ENCODE measurements at regions of chr3 and their contacts with region 1.

Region 1: GRCh38 chr3:102745882-102746281 is 311.1 kb downstream of the ZPLD1 start:
- DNase-seq: peak; percentile 68
- H3K4me3 ChIP-seq: no peak overlapping the region
- H3K27ac ChIP-seq: no peak overlapping the region
- H3K4me1 ChIP-seq: peaks cover 8% of the 10 kb centered on the region
- H3K27me3 ChIP-seq: no peaks in the 10 kb centered on the region
- CTCF ChIP-seq: peak; percentile 63

Region 2: DNA sequence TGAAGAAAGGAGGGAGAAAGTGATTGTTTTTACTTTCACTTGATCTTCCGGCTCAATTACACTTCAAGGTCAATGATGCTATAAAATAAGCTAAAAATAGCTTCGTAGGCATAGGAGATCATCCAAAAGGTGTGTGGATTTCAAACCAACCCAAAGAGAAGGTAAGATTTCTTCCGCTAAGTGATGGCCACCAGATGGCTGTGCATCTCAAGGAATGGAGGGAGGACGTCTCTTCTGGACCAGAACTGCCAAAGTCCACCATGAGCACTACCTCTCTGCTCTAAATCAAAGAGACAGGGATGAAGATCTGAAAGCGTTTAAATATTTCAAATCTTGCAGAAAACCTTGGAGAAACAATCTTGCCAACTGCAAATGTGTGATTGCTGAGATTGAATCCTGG is 510.2 kb before region 1 on chr3:
- CTCF ChIA-PET with region 1: no interaction called
- POLR2A ChIA-PET with region 1: no interaction called
- intact Hi-C with region 1: loop called (anchors 10 kb)
- DNase-seq: peak; percentile 33
- H3K4me3 ChIP-seq: no peak overlapping the region
- H3K27ac ChIP-seq: no peak overlapping the region
- H3K4me1 ChIP-seq: peaks cover 13% of the 10 kb centered on the region
- H3K27me3 ChIP-seq: no peaks in the 10 kb centered on the region
- CTCF ChIP-seq: peak; percentile 62

Region 3: DNA sequence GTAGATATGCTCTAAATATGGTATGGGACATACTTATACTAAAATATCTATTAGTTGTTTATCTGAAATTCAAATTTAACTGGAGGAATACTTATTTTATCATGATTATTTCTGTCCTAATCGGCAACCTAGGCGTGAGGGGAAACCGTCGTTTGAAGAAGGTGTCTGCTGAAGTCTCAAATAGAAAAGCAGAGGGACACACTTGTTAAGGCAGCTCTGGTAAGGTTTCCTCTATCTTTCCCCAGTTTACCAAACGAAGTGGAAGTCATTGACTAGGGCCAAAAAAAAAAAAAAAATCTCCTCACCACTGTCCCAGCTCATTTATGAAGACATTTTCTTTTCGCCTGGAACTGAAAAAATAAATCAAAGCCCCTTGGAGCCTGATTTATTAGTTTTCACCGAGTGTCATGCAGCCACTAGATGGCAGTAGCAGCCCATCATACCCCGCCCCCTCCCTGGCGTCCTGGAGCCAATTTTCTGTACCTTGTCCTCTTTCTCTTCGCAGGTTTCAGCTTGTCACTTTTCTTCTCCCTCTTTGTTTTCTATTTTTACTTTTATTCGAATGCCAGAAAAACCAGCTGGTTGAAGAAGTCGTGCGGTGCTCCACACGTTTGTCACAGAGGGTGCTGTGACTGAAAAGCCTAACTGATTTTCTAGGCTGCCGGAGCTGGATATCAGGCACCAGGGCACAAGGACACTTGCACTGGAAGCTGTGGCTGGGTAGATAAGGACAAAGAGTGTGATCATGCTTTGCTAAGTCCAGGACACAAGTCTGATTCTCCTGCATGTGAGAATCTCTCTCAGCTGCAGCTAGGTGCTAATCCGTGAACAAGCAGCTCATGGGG is 72.4 kb before region 1 on chr3:
- CTCF ChIA-PET with region 1: interaction called, 6 read pairs
- POLR2A ChIA-PET with region 1: no interaction called
- intact Hi-C with region 1: loop called (anchors 2 kb)
- DNase-seq: peak; percentile 89
- H3K4me3 ChIP-seq: peak overlapping the region; percentile 19
- H3K27ac ChIP-seq: peak overlapping the region; percentile 51
- H3K4me1 ChIP-seq: peaks cover 43% of the 10 kb centered on the region
- H3K27me3 ChIP-seq: no peaks in the 10 kb centered on the region
- CTCF ChIP-seq: peak; percentile 91

Region 4: DNA sequence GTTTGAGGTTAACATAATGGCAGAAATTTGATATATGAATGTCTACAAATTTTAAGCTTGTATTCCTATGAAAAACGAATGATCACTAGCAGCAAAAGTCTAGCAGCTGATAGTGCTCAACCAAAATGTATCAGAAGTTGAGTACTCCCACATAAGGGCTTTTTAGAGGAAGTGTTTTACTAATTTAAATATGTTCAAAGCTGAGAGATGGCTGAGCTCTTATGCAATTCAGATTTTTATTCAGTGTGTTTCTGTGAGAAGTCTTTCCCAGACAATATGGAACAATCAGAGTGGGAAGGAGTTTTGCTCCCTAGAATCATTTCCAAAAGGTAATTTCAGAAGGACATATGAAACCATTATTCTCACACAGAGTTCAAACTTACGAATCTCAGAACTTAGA is 15.9 kb after region 1 on chr3:
- CTCF ChIA-PET with region 1: no interaction called
- POLR2A ChIA-PET with region 1: no interaction called
- intact Hi-C with region 1: no loop called
- DNase-seq: no peak
- H3K4me3 ChIP-seq: no peak overlapping the region
- H3K27ac ChIP-seq: no peak overlapping the region
- H3K4me1 ChIP-seq: no peaks in the 10 kb centered on the region
- H3K27me3 ChIP-seq: no peaks in the 10 kb centered on the region
- CTCF ChIP-seq: no peak

Region 5: GRCh38 chr3:103052236-103052830 is 306.5 kb after region 1 on chr3:
- CTCF ChIA-PET with region 1: no interaction called
- POLR2A ChIA-PET with region 1: no interaction called
- intact Hi-C with region 1: loop called (anchors 10 kb)
- DNase-seq: peak; percentile 84
- H3K4me3 ChIP-seq: no peak overlapping the region
- H3K27ac ChIP-seq: peak overlapping the region; percentile 55
- H3K4me1 ChIP-seq: peaks cover 60% of the 10 kb centered on the region
- H3K27me3 ChIP-seq: no peaks in the 10 kb centered on the region
- CTCF ChIP-seq: no peak

Region 6: DNA sequence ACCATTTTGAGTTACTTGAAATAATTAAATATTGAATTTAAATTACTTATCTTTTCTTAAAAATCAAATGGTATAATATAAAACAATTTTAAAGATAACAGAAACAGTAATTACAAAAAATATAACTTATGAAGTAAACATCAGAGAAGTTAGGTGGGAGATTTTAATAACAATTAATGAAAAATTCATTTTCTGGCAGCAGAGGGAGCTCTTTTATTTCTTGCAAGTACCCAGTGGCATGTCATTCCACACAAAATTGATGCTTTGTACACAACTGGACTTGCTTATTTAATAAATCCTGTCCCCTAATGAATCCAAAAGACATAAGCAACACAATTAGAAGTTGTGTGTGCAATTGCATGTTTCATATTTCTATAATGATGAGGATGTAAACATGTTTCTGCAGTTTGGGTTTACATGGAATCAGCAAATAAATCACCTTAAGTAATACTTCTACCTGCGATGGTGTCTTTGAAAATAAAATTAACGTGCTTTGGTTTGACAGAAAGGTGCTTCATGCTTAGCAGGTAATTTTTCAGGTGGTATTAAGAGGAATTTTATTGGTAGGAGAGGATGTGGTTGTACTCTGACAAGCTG is 550.2 kb after region 1 on chr3:
- CTCF ChIA-PET with region 1: no interaction called
- POLR2A ChIA-PET with region 1: no interaction called
- intact Hi-C with region 1: loop called (anchors 10 kb)
- DNase-seq: peak; percentile 79
- H3K4me3 ChIP-seq: no peak overlapping the region
- H3K27ac ChIP-seq: no peak overlapping the region
- H3K4me1 ChIP-seq: peaks cover 45% of the 10 kb centered on the region
- H3K27me3 ChIP-seq: no peaks in the 10 kb centered on the region
- CTCF ChIP-seq: peak; percentile 67

Measured in A673 (cell line).